CD8-positive, alpha-beta T cell (primary cell): ENCODE measurements at regions of chr19 and their contacts with region 1.

Region 1: GRCh38 chr19:12736995-12737834 is at the start of gene GET3:
- DNase-seq: peak; percentile 59 to 94 (median 82)
- ATAC-seq: peak; percentile 78
- H3K4me3 ChIP-seq: peak within 1 kb of the TSS; percentile 70 to 81
- H3K4me3 Mint-ChIP-seq: peak within 1 kb of the TSS; percentile 99
- H3K27ac ChIP-seq: peak within 1 kb of the TSS; percentile 70 to 87
- H3K27ac Mint-ChIP-seq: peak within 1 kb of the TSS; percentile 92
- H3K4me1 ChIP-seq: peaks cover 39% of the 10 kb centered on the region
- H3K4me1 Mint-ChIP-seq: peaks cover 41% of the 10 kb centered on the region
- H3K27me3 ChIP-seq: no peaks in the 10 kb centered on the region
- H3K27me3 Mint-ChIP-seq: no peaks in the 10 kb centered on the region
- CTCF ChIP-seq: no peak
- total RNA-seq, gene GET3: 17.6 to 19.8 TPM

Region 2: DNA sequence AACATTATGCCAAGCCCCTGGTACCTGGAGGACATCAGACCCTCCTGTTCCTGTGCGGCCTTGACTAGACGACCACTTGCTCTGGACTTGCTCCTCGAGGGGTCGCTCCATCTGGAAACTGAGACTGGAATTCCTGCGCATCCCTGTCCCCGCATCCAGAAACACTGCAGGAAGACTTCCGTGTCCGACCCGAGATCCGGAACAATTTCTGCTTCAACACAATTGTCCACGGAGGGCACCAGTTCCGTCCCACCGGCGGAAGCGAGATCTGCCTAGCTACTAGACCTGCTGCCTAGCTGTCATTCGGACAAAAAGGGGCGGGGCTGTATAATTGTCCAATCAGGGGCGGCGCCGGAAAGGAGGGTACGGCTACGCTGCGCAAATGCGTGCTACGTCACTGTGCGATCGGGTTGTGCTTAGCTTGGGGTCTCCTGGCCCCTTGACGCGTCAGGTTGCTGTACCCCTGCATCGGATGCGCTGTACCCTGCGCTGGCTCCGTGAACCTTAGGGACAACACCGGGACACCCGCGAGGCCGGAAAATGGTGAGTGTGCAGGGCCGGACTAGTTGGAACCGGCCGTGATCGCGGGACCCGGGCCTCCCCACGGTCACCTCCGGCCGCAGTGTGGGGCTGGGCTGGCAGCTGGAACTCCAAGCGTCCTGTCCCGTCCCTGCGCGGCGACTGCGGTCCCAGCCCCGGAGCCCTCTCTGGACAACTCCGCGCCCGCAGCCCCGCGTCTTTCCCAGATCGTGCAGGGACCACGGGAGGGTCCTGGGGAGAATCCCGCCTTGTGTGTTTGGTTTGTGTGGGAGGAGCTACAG is 126.5 kb before region 1 on chr19 and contains the starts of genes ZNF490 and ZNF791:
- CTCF ChIA-PET with region 1: no interaction called
- POLR2A ChIA-PET with region 1: no interaction called
- intact Hi-C with region 1: loop called in 1 of 2 experiments (anchors 2 kb)
- DNase-seq: peak; percentile 93 to 98 (median 96)
- ATAC-seq: peak; percentile 86
- H3K4me3 ChIP-seq: peak within 1 kb of the TSS; percentile 83 to 85
- H3K4me3 Mint-ChIP-seq: peak within 1 kb of the TSS; percentile 100
- H3K27ac ChIP-seq: peak within 1 kb of the TSS; percentile 87 to 90
- H3K27ac Mint-ChIP-seq: peak within 1 kb of the TSS; percentile 100
- H3K4me1 ChIP-seq: peaks cover 44% of the 10 kb centered on the region
- H3K4me1 Mint-ChIP-seq: peaks cover 47% of the 10 kb centered on the region
- H3K27me3 ChIP-seq: no peaks in the 10 kb centered on the region
- H3K27me3 Mint-ChIP-seq: no peaks in the 10 kb centered on the region
- CTCF ChIP-seq: no peak
- total RNA-seq, gene ZNF490: 5.1 to 7.0 TPM
- total RNA-seq, gene ZNF791: 61.0 to 67.0 TPM

Region 3: DNA sequence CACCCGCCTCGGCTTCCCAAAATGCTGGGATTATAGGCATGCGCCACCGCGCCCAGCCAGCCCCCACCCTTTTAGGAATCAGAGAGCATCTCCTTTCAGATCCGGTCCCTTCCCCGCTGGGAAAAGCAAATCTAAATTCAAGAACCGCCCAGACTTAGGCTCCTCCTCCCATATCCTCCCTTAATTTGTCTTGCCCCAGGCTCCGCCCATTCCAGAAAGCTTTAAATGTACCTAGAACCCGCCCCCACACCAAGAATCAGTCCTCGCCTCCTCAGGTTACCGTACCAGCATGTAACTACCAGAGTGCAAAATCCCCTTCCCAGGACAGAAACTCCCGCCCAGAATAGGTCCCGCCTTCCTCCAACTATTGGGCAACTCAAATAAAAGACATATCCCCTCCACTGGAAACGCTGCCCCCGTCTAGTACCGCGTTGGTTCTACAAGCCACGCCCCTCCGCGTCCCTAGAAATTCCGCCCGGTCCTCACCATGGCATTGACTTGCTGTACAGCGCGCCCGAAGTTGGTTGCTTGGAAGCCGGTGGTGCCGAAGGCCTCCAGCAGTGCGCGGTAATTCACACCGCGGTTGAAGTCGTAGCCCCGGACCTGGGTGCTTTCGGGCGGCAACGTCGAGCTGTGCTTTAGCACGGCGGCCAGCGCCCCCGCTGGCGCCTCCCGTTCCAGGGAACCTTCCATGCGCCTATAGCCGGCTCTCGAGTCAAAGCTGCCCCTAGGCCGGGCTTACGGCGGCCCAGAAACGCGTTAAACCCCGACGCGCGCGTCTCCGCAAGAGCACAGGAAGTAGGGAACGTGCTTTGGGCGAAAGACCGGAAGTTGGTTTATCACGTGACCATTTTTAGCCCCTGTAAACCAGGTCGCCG is 55.9 kb before region 1 on chr19 and contains the start of gene DHPS:
- CTCF ChIA-PET with region 1: interaction called, 7 read pairs
- POLR2A ChIA-PET with region 1: interaction called, 4 read pairs
- intact Hi-C with region 1: loop called (anchors 1 kb)
- DNase-seq: peak; percentile 81 to 99 (median 90)
- ATAC-seq: peak; percentile 74
- H3K4me3 ChIP-seq: peak within 1 kb of the TSS; percentile 83 to 96
- H3K4me3 Mint-ChIP-seq: peak within 1 kb of the TSS; percentile 96
- H3K27ac ChIP-seq: peak within 1 kb of the TSS; percentile 82 to 97
- H3K27ac Mint-ChIP-seq: peak within 1 kb of the TSS; percentile 92
- H3K4me1 ChIP-seq: peaks cover 19% of the 10 kb centered on the region
- H3K4me1 Mint-ChIP-seq: peaks cover 29% of the 10 kb centered on the region
- H3K27me3 ChIP-seq: no peaks in the 10 kb centered on the region
- H3K27me3 Mint-ChIP-seq: no peaks in the 10 kb centered on the region
- CTCF ChIP-seq: no peak
- total RNA-seq, gene DHPS: 98.7 to 100 TPM

Region 4: DNA sequence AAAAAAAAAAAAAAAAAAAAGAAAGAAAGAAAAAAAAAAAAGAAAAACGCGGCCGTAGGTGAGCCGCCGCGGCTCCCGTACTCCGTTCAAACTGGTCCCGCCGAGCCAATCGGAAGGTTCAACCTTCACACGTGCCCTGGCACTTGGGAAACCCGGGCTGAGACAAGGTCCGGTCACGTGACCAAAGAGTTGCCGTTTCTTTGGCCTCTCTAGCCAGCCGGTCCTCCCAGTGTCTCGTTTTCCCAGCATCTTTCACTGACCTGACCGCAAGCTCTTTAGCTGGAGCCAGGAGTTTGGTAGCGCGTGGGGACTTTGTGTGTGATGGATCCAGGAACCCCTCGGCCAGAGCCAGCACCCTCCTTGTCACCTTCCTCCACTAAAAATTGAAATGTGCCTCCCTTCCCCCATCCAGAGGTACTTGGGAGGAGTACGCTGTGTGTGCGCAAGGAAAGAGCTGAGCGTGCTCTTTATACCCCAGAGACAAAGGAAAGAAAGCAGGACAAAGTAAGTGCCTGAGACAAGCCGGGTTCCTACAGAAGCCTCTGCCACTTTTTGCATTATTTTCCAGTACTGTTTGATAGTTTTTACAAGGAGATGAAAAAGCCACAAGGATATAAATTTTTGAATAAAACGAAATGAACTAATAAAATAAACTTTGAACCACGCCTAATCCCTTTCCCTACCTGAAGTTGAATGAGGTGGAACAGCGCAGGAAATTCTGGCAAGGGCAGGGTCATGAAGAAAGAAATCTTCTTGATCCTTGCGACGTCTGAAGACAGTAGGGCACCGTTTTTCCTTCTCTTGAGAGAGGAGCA is 14.4 kb before region 1 on chr19:
- CTCF ChIA-PET with region 1: interaction called, 17 read pairs
- POLR2A ChIA-PET with region 1: interaction called, 32 read pairs
- intact Hi-C with region 1: loop called (anchors 1 kb)
- DNase-seq: peak; percentile 81 to 99 (median 92)
- ATAC-seq: peak; percentile 88
- H3K4me3 ChIP-seq: peak overlapping the region; percentile 78 to 85
- H3K4me3 Mint-ChIP-seq: peak overlapping the region; percentile 93
- H3K27ac ChIP-seq: peak overlapping the region; percentile 55 to 80
- H3K27ac Mint-ChIP-seq: peak overlapping the region; percentile 89
- H3K4me1 ChIP-seq: peaks cover 28% of the 10 kb centered on the region
- H3K4me1 Mint-ChIP-seq: peaks cover 37% of the 10 kb centered on the region
- H3K27me3 ChIP-seq: no peaks in the 10 kb centered on the region
- H3K27me3 Mint-ChIP-seq: no peaks in the 10 kb centered on the region
- CTCF ChIP-seq: no peak

Region 5: DNA sequence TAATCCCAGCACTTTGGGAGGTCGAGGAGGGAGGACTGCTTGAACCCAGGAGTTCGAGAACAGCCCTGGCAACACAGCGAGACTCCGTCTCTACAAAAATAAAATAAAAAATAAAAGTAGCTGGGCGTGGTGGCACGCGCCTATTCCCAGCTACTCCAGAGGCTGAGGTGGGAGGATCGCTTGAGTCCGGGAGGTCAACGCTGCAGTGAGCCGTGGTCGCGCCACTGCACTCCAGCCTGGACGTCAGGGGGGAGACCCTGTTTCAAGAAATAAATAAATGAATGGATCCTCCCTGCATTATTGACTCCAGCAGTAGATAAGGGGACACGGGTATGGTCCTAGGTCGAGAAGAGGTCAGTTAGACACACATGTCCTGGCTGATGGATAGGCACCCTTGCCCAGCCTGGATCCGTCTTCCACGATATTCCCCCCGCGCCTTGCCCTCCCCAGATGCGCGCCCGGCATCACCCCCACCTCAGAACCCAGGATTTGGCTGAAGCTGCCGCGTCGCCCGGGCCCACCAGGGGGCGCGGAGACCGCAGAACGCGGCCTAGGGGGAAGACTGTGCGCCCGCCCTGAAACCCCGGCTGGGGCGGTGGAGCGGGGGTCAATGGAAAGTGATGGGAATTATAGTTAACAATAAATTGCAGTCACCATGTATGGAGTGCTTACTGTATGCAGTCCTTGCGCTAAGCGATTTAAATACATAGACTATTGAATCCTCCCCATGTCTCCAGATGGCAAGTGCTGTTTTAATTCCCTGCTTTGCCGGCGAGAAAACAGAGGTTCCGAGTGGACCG is 40.2 kb after region 1 on chr19:
- CTCF ChIA-PET with region 1: interaction called, 4 read pairs
- POLR2A ChIA-PET with region 1: no interaction called
- intact Hi-C with region 1: loop called (anchors 1 kb)
- DNase-seq: peak; percentile 68 to 89 (median 80)
- ATAC-seq: peak; percentile 4
- H3K4me3 ChIP-seq: peak overlapping the region; percentile 63 to 86
- H3K4me3 Mint-ChIP-seq: peak overlapping the region; percentile 82
- H3K27ac ChIP-seq: peak overlapping the region; percentile 57 to 87
- H3K27ac Mint-ChIP-seq: peak overlapping the region; percentile 85
- H3K4me1 ChIP-seq: peaks cover 38% of the 10 kb centered on the region
- H3K4me1 Mint-ChIP-seq: peaks cover 36% of the 10 kb centered on the region
- H3K27me3 ChIP-seq: no peaks in the 10 kb centered on the region
- H3K27me3 Mint-ChIP-seq: no peaks in the 10 kb centered on the region
- CTCF ChIP-seq: peak; percentile 97

Region 6: GRCh38 chr19:12796146-12797071 is 59.2 kb after region 1 on chr19:
- CTCF ChIA-PET with region 1: interaction called, 12 read pairs
- POLR2A ChIA-PET with region 1: interaction called, 27 read pairs
- intact Hi-C with region 1: loop called (anchors 1 kb)
- DNase-seq: peak; percentile 46 to 88 (median 78)
- ATAC-seq: peak; percentile 6
- H3K4me3 ChIP-seq: peak overlapping the region; percentile 5 to 25
- H3K4me3 Mint-ChIP-seq: peak overlapping the region; percentile 70
- H3K27ac ChIP-seq: peak overlapping the region in 1 of 2 experiments; percentile 36
- H3K27ac Mint-ChIP-seq: peak overlapping the region; percentile 89
- H3K4me1 ChIP-seq: peaks cover 36% of the 10 kb centered on the region
- H3K4me1 Mint-ChIP-seq: peaks cover 38% of the 10 kb centered on the region
- H3K27me3 ChIP-seq: no peaks in the 10 kb centered on the region
- H3K27me3 Mint-ChIP-seq: no peaks in the 10 kb centered on the region
- CTCF ChIP-seq: peak; percentile 86

Region 7: DNA sequence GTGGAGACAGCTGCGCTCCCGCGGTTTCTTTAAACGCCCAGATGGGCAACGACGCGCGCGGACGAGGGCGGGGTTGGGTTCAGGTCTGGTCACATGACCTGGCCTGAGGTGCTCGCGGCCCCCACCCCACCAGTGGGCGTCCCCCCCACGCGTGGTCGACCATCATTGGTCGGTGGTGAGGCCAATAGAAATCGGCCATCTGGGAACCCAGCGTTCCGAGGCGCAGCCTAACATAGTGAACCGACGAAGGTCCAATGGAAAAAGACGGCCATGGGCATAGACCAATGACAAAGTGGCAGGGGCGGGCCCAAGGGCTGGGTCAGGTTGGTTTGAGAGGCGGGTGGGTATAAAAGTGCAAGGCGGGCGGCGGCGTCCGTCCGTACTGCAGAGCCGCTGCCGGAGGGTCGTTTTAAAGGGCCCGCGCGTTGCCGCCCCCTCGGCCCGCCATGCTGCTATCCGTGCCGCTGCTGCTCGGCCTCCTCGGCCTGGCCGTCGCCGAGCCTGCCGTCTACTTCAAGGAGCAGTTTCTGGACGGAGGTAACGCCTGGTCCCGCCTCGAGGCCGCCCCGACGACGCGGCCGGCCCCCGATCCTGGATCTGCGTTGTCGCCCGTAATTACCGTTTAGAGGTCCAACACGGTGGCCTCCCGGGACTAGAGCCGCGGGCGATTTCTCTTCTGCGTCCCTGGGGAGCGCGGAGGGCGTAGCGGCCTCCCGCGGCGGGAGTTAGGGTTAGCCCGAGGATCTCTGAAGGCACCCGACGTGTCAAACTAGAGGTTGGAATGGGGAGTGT is 201.2 kb after region 1 on chr19 and contains the start of gene CALR:
- CTCF ChIA-PET with region 1: no interaction called
- POLR2A ChIA-PET with region 1: no interaction called
- intact Hi-C with region 1: loop called in 1 of 2 experiments (anchors 1 kb)
- DNase-seq: peak; percentile 98 to 100 (median 99)
- ATAC-seq: peak; percentile 88
- H3K4me3 ChIP-seq: peak within 1 kb of the TSS; percentile 71 to 91
- H3K4me3 Mint-ChIP-seq: peak within 1 kb of the TSS; percentile 99
- H3K27ac ChIP-seq: peak within 1 kb of the TSS; percentile 86
- H3K27ac Mint-ChIP-seq: peak within 1 kb of the TSS; percentile 96
- H3K4me1 ChIP-seq: peaks cover 41% of the 10 kb centered on the region
- H3K4me1 Mint-ChIP-seq: peaks cover 58% of the 10 kb centered on the region
- H3K27me3 ChIP-seq: no peaks in the 10 kb centered on the region
- H3K27me3 Mint-ChIP-seq: no peaks in the 10 kb centered on the region
- CTCF ChIP-seq: no peak
- total RNA-seq, gene CALR: 618 to 650 TPM

Region 8: DNA sequence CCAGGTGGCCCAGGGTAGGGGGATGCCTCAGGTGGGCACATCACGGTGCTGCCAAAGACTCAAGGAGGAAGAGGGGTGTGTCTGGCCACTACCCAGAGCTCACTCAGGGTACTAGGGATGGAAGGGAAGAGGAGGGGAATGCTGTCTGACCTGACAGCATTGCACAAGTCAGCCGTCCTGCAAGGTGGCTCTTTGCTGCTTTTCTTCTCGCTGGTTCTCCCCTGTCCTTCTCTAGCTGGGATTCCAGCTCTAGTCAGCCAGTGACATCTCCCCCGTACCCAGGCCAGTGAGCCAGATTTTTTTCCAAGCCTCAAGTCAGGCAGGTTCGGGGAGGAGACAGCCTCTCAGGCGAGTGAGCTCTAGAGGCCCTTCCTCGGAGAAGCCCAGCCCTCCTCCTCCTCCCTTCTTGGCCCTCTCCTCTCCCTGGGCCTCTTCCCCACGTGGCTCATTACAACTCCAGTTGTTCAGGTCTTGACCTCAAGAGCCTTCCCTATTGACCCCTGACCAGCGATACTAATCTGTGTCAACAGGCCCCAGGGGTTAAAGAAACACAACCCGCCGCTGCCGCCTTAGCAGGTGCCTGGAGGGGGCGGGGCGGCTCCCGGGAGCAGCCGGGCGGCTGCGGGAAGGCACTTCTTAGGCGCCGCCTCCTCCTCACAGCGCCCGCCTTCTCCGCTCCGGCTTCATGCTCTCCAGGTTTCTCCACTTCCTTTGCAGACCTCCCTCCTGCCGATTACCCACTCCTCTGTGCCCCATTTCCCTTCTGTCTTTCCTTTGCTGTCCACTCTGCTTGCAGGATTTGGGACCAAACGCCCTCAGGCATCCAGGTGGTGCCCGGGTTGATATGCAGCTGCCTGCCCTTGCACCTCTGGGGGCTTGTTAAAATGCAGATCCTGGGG is 314.3 kb after region 1 on chr19:
- CTCF ChIA-PET with region 1: no interaction called
- POLR2A ChIA-PET with region 1: no interaction called
- intact Hi-C with region 1: no loop called
- DNase-seq: peak in 3 of 9 experiments; percentile 22 to 37 (median 22)
- ATAC-seq: peak; percentile 31
- H3K4me3 ChIP-seq: no peak overlapping the region
- H3K4me3 Mint-ChIP-seq: peak overlapping the region; percentile 46
- H3K27ac ChIP-seq: no peak overlapping the region
- H3K27ac Mint-ChIP-seq: no peak overlapping the region
- H3K4me1 ChIP-seq: peaks cover 7% of the 10 kb centered on the region
- H3K4me1 Mint-ChIP-seq: peaks cover 10% of the 10 kb centered on the region
- H3K27me3 ChIP-seq: peaks cover 0 to 7% of the 10 kb centered on the region in 2 experiments
- H3K27me3 Mint-ChIP-seq: peaks cover 5% of the 10 kb centered on the region
- CTCF ChIP-seq: no peak